ENCODE measurements at regions of chr10 and their contacts with region 1.

Region 1: DNA sequence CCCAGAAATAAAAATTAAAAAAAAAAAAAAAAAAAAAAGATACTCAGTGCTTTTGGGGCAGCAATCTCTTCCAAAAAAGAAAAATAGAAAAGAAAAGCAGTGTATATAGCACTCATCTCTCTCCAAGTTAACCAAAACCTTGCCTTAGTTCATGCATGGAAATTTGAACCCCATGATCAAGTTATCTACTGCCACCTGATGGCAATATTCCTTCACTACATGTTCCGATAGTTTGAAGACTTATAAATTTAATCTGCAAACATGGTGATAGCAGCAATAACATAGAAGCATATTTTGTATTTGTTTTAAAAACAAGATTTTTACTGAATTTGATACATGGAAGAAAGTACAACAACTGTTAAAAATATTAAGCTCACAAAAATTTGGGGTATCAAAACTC is 48.6 kb upstream of the SLIT1 start:
- H3K4me3 ChIP-seq: no peak overlapping the region
- H3K27ac ChIP-seq: no peak overlapping the region
- H3K4me1 ChIP-seq: no peaks in the 10 kb centered on the region
- CTCF ChIP-seq: 0 out of 2 replicates have a peak, but pooled peaks have one; percentile 21

Region 2: DNA sequence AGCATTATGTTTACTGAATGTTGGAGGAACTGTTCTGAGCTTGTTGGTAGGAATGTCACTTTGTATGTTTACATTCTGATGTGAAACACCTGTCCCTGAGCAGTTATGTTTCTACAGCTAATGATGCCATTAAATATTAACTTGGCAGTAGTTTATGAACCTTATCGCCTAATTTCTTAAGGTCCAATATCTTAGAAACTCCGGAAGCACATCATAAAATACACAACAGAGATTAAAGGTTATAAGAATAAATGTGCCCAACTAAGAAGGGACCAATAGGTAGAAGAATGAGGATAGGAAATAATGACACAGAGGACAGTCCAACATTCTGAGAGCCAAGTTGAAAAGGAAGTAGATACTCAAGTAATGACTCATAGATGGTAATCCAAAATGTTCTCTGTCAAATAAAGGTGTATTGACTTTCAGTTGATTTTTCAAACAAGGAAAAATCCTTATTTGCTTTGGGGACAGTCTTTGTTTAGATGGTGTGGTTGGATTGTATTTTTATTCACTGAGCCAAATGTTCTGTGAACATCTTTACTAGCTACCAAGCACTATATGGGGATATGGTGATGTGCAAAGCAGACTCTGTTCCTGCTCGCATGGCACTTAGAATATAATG is 370.4 kb before region 1 on chr10:
- CTCF ChIA-PET with region 1: no interaction called
- POLR2A ChIA-PET with region 1: interaction called, 11 read pairs
- H3K4me3 ChIP-seq: no peak overlapping the region
- H3K27ac ChIP-seq: no peak overlapping the region
- H3K4me1 ChIP-seq: no peaks in the 10 kb centered on the region
- CTCF ChIP-seq: no peak

Region 3: GRCh38 chr10:97037365-97038361 is 196.7 kb before region 1 on chr10:
- CTCF ChIA-PET with region 1: interaction called, 21 read pairs
- POLR2A ChIA-PET with region 1: no interaction called
- H3K4me3 ChIP-seq: no peak overlapping the region
- H3K27ac ChIP-seq: no peak overlapping the region
- H3K4me1 ChIP-seq: no peaks in the 10 kb centered on the region
- CTCF ChIP-seq: peak; percentile 96

Region 4: DNA sequence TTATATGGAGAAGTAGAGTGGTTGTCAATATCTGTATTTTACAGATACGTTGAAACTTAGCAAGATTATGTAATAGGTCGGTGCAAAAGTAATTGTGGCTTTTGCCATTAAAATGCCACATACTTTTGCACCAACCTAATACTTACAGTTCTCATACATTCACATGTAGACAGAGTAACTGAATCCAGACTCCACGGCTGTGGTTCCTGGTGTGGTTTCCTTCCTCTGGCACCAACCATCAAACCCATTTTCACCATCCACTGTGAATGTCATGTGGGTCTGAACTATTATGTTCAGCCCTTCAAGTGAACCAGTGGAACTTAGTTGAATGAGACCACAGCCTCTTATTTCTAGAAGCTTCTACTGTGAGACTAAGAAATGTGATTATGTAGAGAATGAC is 17.1 kb before region 1 on chr10:
- CTCF ChIA-PET with region 1: interaction called, 19 read pairs
- POLR2A ChIA-PET with region 1: interaction called, 3 read pairs
- H3K4me3 ChIP-seq: no peak overlapping the region
- H3K27ac ChIP-seq: no peak overlapping the region
- H3K4me1 ChIP-seq: no peaks in the 10 kb centered on the region
- CTCF ChIP-seq: no peak

Region 5: DNA sequence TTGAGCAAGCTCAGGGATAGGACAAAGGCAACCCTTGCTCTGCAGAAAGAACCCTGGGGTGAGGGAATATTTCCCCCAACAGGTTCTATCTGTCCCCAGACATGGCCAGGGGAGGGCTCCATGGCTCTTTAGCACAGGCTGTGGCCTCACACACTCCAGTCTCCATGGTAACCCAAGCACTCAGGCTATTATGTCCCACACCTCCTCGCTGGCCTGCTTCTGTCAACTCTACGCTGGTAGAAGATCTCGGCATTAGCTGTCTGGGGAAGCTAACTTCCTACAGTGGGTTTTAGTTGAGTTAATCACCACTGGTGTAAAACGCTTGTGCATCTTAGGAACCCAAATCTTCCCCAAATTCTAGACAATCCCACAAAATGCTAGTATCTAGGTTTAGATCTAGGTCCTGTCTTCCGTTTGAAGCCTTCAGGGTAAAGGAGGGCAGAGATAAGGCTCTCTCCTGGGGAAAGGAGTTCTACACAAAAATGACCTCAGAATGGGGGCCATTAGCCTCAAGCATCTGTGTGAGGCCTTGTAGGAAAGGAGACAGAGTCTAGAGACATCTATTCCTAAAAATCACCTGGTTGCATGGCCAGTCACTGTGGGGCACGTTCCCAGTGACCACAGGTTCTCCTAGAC is 12.0 kb before region 1 on chr10:
- CTCF ChIA-PET with region 1: interaction called, 22 read pairs
- POLR2A ChIA-PET with region 1: interaction called, 3 read pairs
- H3K4me3 ChIP-seq: no peak overlapping the region
- H3K27ac ChIP-seq: no peak overlapping the region
- H3K4me1 ChIP-seq: no peaks in the 10 kb centered on the region
- CTCF ChIP-seq: 0 out of 2 replicates have a peak, but pooled peaks have one; percentile 24

Region 6: GRCh38 chr10:97365761-97366351 is 131.5 kb after region 1 on chr10:
- CTCF ChIA-PET with region 1: no interaction called
- POLR2A ChIA-PET with region 1: no interaction called
- H3K4me3 ChIP-seq: no peak overlapping the region
- H3K27ac ChIP-seq: no peak overlapping the region
- H3K4me1 ChIP-seq: no peaks in the 10 kb centered on the region
- CTCF ChIP-seq: no peak

Measured in HEK293 (cell line).